Uterus (tissue), 4 donors: ENCODE measurements at regions of chr22 and their contacts with region 1.

Region 1: DNA sequence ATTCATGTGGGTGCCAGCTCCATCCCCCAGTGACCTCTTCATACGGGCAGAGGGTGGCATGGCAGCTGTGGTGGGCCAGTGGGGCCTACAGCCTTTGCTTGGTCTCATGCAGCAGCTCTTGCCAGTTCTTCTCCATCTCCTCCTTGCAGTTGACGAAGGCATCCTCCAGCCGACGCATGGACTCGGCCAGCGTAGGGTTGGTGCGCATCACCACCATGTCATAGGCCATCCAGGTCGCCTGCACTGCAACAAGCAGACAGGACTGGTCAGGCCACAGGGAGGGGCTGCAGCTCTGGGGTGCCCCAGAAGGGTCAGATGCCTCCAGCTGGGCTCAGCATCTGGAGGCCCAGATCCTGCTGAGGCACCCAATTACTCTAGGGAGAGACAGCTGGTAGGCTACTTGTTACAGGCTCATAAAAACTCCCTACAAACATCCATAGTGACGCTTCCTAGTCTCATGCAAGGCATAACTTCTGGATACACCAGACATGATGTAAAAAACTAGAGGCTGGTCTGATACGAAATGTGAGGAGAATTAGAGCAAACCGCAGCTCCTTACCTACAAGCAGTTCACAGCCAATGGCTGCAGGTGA is 5.6 kb downstream of the KLHDC7B start:
- DNase-seq: no peak
- H3K4me3 ChIP-seq: no peak overlapping the region
- H3K27ac ChIP-seq: no peak overlapping the region
- H3K4me1 ChIP-seq: peaks cover 0 to 12% of the 10 kb centered on the region in 2 donors
- H3K27me3 ChIP-seq: peaks cover 9 to 14% of the 10 kb centered on the region in 2 donors
- CTCF ChIP-seq: no peak
- POLR2A ChIP-seq: no peak

Region 2: GRCh38 chr22:50507991-50508884 is 43.0 kb before region 1 on chr22 and contains the start of gene NCAPH2:
- intact Hi-C with region 1: loop called (anchors 5 kb)
- DNase-seq: peak; percentile 96 to 98
- H3K4me3 ChIP-seq: peak within 1 kb of the TSS; percentile 98 to 99
- H3K27ac ChIP-seq: peak within 1 kb of the TSS; percentile 90 to 94
- H3K4me1 ChIP-seq: peaks cover 3 to 13% of the 10 kb centered on the region in 2 donors
- H3K27me3 ChIP-seq: no peaks in the 10 kb centered on the region
- CTCF ChIP-seq: peak in 2 of 4 experiments; percentile 12 to 18
- POLR2A ChIP-seq: peak; percentile 71 to 89
- total RNA-seq, gene NCAPH2: 51.7 to 155 (median 55.4) TPM